ENCODE measurements at regions of chr6 and their contacts with region 1.

Region 1: GRCh38 chr6:118800394-118801071 is 93.4 kb upstream of the ASF1A start:
- DNase-seq: peak; percentile 45 to 90 (median 86)
- ATAC-seq: peak; percentile 95
- H3K4me3 ChIP-seq: peak overlapping the region; percentile 22
- H3K4me3 Mint-ChIP-seq: peak overlapping the region; percentile 14 to 88 (median 68)
- H3K27ac ChIP-seq: no peak overlapping the region
- H3K27ac Mint-ChIP-seq: peak overlapping the region; percentile 73 to 93 (median 86)
- H3K4me1 ChIP-seq: peaks cover 17 to 25% of the 10 kb centered on the region in 2 donors
- H3K4me1 Mint-ChIP-seq: peaks cover 17 to 51% (median 37%) of the 10 kb centered on the region in 7 donors
- H3K27me3 ChIP-seq: no peaks in the 10 kb centered on the region
- H3K27me3 Mint-ChIP-seq: no peaks in the 10 kb centered on the region

Region 2: DNA sequence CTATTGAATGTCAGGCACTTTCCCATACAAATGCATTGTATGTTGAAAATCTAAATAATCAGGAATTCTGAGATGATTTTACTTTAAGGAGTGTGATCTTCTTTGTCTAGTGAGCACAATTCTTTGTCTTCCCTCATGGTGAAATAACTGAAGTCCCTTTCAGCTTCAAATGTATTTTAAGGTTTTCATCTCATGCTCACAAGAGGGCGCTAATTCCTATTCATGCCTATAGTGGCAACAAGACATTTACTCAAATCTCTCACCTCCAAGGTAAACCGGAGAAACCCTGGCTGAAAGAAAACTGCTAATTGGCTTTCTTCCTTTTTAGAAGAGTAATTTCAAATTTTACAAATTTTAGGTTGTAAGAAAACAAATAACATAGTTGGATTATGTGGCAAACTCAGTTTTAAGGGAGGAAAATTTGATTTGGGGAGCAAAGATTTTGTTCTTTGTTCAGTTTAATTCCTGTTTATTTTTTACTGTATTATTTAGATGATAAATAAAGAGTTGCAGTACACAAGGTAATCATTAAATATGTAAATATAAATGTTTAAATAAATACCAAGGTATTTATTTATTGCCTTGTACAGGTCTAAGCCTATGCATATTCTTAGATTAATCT is 824.4 kb before region 1 on chr6:
- CTCF ChIA-PET with region 1: interaction called, 4 read pairs
- POLR2A ChIA-PET with region 1: no interaction called
- intact Hi-C with region 1: loop called in 1 of 2 experiments (anchors 5 kb)
- DNase-seq: peak in 6 of 9 donors; percentile 18 to 42 (median 24)
- ATAC-seq: no peak
- H3K4me3 ChIP-seq: no peak overlapping the region
- H3K4me3 Mint-ChIP-seq: no peak overlapping the region
- H3K27ac ChIP-seq: no peak overlapping the region
- H3K27ac Mint-ChIP-seq: no peak overlapping the region
- H3K4me1 ChIP-seq: no peaks in the 10 kb centered on the region
- H3K4me1 Mint-ChIP-seq: no peaks in the 10 kb centered on the region
- H3K27me3 ChIP-seq: no peaks in the 10 kb centered on the region
- H3K27me3 Mint-ChIP-seq: peaks cover 7 to 24% (median 16%) of the 10 kb centered on the region in 5 donors

Region 3: GRCh38 chr6:118558464-118559217 is 241.9 kb before region 1 on chr6:
- CTCF ChIA-PET with region 1: interaction called, 32 read pairs
- POLR2A ChIA-PET with region 1: interaction called, 4 read pairs
- intact Hi-C with region 1: loop called in 1 of 2 experiments (anchors 1 kb)
- DNase-seq: peak in 7 of 9 donors; percentile 58 to 81 (median 72)
- ATAC-seq: peak; percentile 95
- H3K4me3 ChIP-seq: peak overlapping the region; percentile 15
- H3K4me3 Mint-ChIP-seq: peak overlapping the region; percentile 39 to 90 (median 81)
- H3K27ac ChIP-seq: peak overlapping the region; percentile 74
- H3K27ac Mint-ChIP-seq: peak overlapping the region; percentile 93 to 99 (median 96)
- H3K4me1 ChIP-seq: peaks cover 19 to 25% of the 10 kb centered on the region in 2 donors
- H3K4me1 Mint-ChIP-seq: peaks cover 17 to 71% (median 50%) of the 10 kb centered on the region in 7 donors
- H3K27me3 ChIP-seq: no peaks in the 10 kb centered on the region
- H3K27me3 Mint-ChIP-seq: peaks cover 0 to 2% (median 0%) of the 10 kb centered on the region in 5 donors

Region 4: GRCh38 chr6:118639054-118639964 is 161.2 kb before region 1 on chr6:
- CTCF ChIA-PET with region 1: no interaction called
- POLR2A ChIA-PET with region 1: no interaction called
- intact Hi-C with region 1: loop called in 1 of 2 experiments (anchors 1 kb)
- DNase-seq: peak in 2 of 9 donors; percentile 17 to 28
- ATAC-seq: peak; percentile 57
- H3K4me3 ChIP-seq: no peak overlapping the region
- H3K4me3 Mint-ChIP-seq: peak overlapping the region in 8 of 10 donors; percentile 7 to 71 (median 38)
- H3K27ac ChIP-seq: no peak overlapping the region
- H3K27ac Mint-ChIP-seq: peak overlapping the region in 6 of 9 donors; percentile 34 to 86 (median 48)
- H3K4me1 ChIP-seq: peaks cover 10 to 12% of the 10 kb centered on the region in 2 donors
- H3K4me1 Mint-ChIP-seq: peaks cover 31 to 88% (median 80%) of the 10 kb centered on the region in 7 donors
- H3K27me3 ChIP-seq: no peaks in the 10 kb centered on the region
- H3K27me3 Mint-ChIP-seq: no peaks in the 10 kb centered on the region

Region 5: GRCh38 chr6:118709859-118710350 is 90.6 kb before region 1 on chr6:
- CTCF ChIA-PET with region 1: interaction called, 6 read pairs
- POLR2A ChIA-PET with region 1: interaction called, 23 read pairs
- intact Hi-C with region 1: loop called (anchors 1 to 2 kb)
- DNase-seq: peak; percentile 25 to 87 (median 83)
- ATAC-seq: peak; percentile 93
- H3K4me3 ChIP-seq: peak overlapping the region; percentile 91
- H3K4me3 Mint-ChIP-seq: peak overlapping the region; percentile 95 to 100 (median 97)
- H3K27ac ChIP-seq: peak overlapping the region; percentile 76
- H3K27ac Mint-ChIP-seq: peak overlapping the region; percentile 94 to 99 (median 97)
- H3K4me1 ChIP-seq: peaks cover 48 to 49% of the 10 kb centered on the region in 2 donors
- H3K4me1 Mint-ChIP-seq: peaks cover 47 to 81% (median 74%) of the 10 kb centered on the region in 7 donors
- H3K27me3 ChIP-seq: no peaks in the 10 kb centered on the region
- H3K27me3 Mint-ChIP-seq: no peaks in the 10 kb centered on the region

Region 6: GRCh38 chr6:118776607-118777549 is 23.7 kb before region 1 on chr6:
- CTCF ChIA-PET with region 1: interaction called, 6 read pairs
- POLR2A ChIA-PET with region 1: interaction called, 8 read pairs
- intact Hi-C with region 1: loop called (anchors 1 kb)
- DNase-seq: peak in 8 of 9 donors; percentile 42 to 77 (median 65)
- ATAC-seq: peak; percentile 92
- H3K4me3 ChIP-seq: no peak overlapping the region
- H3K4me3 Mint-ChIP-seq: peak overlapping the region; percentile 1 to 75 (median 48)
- H3K27ac ChIP-seq: no peak overlapping the region
- H3K27ac Mint-ChIP-seq: peak overlapping the region in 8 of 9 donors; percentile 12 to 87 (median 75)
- H3K4me1 ChIP-seq: peaks cover 4 to 11% of the 10 kb centered on the region in 2 donors
- H3K4me1 Mint-ChIP-seq: peaks cover 16 to 31% (median 23%) of the 10 kb centered on the region in 7 donors
- H3K27me3 ChIP-seq: no peaks in the 10 kb centered on the region
- H3K27me3 Mint-ChIP-seq: peaks cover 0 to 17% (median 0%) of the 10 kb centered on the region in 5 donors

Region 7: DNA sequence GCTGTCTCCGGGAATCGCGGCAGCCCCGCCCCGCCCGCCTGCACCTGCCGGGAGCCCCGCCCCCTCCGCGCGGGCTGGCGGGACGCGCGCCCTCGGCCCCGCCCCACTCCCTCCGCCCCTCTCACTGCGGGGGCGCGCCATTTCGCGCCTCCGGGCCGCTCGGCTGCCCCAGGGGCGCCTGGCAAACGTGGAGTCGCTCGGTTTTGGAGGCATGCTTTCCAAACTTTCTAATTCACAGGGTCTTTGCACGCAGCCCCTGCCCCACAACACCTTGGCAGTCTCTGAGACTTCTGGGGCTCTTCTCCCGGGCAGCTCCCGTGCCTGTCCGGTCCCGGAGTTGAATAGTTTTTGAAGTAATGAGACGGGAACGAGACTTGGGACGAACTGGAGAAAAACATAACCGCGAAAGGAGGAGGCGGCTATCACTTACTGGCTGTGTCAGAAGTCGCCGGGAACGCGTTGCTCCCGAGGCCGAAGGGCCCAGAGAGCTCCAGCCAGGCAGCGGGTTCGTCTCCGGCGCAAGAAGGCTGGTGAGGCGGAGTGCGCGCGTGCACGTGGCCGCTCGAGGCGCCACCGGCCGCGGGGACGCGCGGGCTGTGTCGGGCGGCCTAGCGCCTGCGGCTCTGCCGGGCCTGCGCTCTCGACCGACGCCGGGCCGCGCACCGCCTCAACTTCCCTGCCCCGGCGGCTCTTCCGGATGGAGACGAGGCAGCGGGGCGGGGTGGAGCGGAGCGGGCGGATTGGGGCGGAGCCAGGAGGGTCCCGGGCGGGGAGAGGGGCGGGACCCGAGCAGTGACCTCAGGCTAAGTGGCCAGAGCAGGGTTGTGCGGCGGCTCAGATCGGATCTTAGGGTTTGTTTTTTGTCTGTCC is 134.2 kb after region 1 on chr6 and contains the start of gene MCM9:
- CTCF ChIA-PET with region 1: no interaction called
- POLR2A ChIA-PET with region 1: no interaction called
- intact Hi-C with region 1: loop called in 1 of 2 experiments (anchors 1 kb)
- DNase-seq: peak; percentile 77 to 93 (median 86)
- ATAC-seq: peak; percentile 92
- H3K4me3 ChIP-seq: peak within 1 kb of the TSS; percentile 98
- H3K4me3 Mint-ChIP-seq: peak within 1 kb of the TSS; percentile 86 to 96 (median 91)
- H3K27ac ChIP-seq: peak within 1 kb of the TSS; percentile 95
- H3K27ac Mint-ChIP-seq: peak within 1 kb of the TSS; percentile 86 to 95 (median 93)
- H3K4me1 ChIP-seq: peaks cover 4 to 8% of the 10 kb centered on the region in 2 donors
- H3K4me1 Mint-ChIP-seq: peaks cover 22 to 47% (median 41%) of the 10 kb centered on the region in 7 donors
- H3K27me3 ChIP-seq: no peaks in the 10 kb centered on the region
- H3K27me3 Mint-ChIP-seq: no peaks in the 10 kb centered on the region
- total RNA-seq, gene MCM9: 21.8 to 33.7 (median 31.1) TPM

Measured in naive thymus-derived CD4-positive, alpha-beta T cell (primary cell).